Caco-2 (cell line): ENCODE measurements at regions of chr1 and their contacts with region 1.

Region 1: DNA sequence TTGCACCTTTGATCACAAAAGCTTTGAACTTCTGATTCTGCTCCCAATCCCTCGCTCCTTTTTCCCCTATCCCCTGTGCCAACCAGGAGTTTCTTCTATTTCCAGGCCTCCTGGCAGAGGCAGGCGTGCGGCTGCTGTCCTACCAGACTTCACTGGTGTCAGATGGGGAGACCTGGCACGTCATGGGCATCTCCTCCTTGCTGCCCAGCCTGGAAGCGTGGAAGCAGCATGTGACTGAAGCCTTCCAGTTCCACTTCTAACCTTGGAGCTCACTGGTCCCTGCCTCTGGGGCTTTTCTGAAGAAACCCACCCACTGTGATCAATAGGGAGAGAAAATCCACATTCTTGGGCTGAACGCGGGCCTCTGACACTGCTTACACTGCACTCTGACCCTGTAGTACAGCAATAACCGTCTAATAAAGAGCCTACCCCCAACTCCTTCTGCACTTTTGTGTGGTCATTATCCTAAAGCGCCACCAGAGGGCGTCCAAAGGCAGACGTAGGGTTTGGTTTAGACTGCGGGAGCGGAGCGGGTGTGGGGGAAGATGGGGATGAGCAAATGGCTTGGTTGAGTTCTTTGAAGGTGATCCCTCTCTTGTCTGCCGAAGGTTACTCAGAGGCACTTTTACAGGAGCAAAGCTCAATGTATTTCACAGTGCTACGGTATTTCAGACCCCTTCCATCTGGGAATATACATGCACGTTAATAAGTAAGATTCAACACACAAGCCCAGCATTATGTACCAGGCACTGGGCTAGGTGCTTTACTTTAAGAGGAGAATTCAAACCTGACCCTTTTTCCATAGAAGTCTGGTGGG is 24.7 kb downstream of the HMGCS2 start:
- DNase-seq: peak; percentile 69 to 73
- H3K4me3 ChIP-seq: no peak overlapping the region
- H3K4me3 Mint-ChIP-seq: peak overlapping the region; percentile 12
- H3K27ac Mint-ChIP-seq: peak overlapping the region; percentile 30
- H3K4me1 ChIP-seq: peaks cover 8% of the 10 kb centered on the region; the same call in 1 of the 2 replicates
- H3K4me1 Mint-ChIP-seq: peaks cover 13% of the 10 kb centered on the region
- H3K27me3 ChIP-seq: no peaks in the 10 kb centered on the region
- H3K27me3 Mint-ChIP-seq: no peaks in the 10 kb centered on the region
- CTCF ChIP-seq: peak; percentile 79 to 80

Region 2: DNA sequence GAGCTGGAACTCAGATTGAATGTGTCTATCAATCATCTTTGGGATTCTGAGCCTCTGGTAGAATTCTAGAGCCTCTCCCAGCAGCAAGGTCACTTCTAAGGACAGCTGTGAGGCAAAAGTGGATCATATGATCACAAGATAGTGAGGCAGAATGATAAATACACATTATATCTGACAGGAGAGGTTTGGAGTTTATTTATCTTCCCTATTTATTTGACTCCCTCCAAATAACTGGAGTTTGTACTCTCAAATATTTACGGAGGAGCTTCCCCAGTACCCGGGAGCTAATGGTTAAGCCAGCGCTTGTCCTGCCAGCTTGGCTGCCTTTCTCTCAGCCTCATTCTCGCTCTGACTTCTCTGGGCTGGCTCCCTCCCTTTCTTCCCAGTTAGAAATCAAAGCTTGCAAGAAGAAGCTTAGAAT is 22.4 kb after region 1 on chr1:
- CTCF ChIA-PET with region 1: interaction called, 3 read pairs
- POLR2A ChIA-PET with region 1: no interaction called
- intact Hi-C with region 1: loop called (anchors 1 kb)
- DNase-seq: peak; percentile 65 to 71
- H3K4me3 ChIP-seq: peak overlapping the region; percentile 37
- H3K4me3 Mint-ChIP-seq: peak overlapping the region; percentile 63
- H3K27ac Mint-ChIP-seq: peak overlapping the region; percentile 45
- H3K4me1 ChIP-seq: peaks cover 60% of the 10 kb centered on the region
- H3K4me1 Mint-ChIP-seq: peaks cover 24% of the 10 kb centered on the region
- H3K27me3 ChIP-seq: no peaks in the 10 kb centered on the region
- H3K27me3 Mint-ChIP-seq: no peaks in the 10 kb centered on the region
- CTCF ChIP-seq: no peak

Region 3: DNA sequence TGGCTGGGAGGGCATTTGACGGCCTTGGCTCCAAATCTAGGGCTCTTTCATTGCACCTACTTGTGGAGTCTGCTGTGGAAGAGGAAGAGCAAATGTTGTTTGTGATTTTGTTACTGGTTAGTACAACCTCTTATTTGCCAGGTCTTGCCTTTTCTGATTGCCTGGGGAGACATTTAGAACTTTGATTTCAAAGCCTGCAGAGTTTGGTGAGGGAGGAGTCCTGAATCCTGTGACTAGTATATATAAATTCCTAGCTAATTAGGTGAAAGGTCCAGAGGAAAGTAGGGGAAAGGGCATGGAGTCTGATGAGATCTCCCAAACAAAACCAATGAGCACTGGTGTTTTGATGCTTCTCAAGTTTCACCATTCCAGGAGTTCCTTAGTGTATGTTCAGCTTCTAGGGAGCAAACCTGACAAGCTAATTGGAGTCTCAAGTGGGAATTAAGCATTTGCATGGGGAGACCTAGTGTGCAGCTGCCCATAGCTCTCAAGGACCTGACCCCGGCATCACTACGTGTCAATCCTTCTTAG is 29.8 kb after region 1 on chr1:
- CTCF ChIA-PET with region 1: interaction called, 3 read pairs
- POLR2A ChIA-PET with region 1: no interaction called
- intact Hi-C with region 1: loop called (anchors 1 kb)
- DNase-seq: no peak
- H3K4me3 ChIP-seq: no peak overlapping the region
- H3K4me3 Mint-ChIP-seq: no peak overlapping the region
- H3K27ac Mint-ChIP-seq: no peak overlapping the region
- H3K4me1 ChIP-seq: peaks cover 70% of the 10 kb centered on the region
- H3K4me1 Mint-ChIP-seq: peaks cover 19% of the 10 kb centered on the region
- H3K27me3 ChIP-seq: no peaks in the 10 kb centered on the region
- H3K27me3 Mint-ChIP-seq: no peaks in the 10 kb centered on the region
- CTCF ChIP-seq: no peak

Region 4: DNA sequence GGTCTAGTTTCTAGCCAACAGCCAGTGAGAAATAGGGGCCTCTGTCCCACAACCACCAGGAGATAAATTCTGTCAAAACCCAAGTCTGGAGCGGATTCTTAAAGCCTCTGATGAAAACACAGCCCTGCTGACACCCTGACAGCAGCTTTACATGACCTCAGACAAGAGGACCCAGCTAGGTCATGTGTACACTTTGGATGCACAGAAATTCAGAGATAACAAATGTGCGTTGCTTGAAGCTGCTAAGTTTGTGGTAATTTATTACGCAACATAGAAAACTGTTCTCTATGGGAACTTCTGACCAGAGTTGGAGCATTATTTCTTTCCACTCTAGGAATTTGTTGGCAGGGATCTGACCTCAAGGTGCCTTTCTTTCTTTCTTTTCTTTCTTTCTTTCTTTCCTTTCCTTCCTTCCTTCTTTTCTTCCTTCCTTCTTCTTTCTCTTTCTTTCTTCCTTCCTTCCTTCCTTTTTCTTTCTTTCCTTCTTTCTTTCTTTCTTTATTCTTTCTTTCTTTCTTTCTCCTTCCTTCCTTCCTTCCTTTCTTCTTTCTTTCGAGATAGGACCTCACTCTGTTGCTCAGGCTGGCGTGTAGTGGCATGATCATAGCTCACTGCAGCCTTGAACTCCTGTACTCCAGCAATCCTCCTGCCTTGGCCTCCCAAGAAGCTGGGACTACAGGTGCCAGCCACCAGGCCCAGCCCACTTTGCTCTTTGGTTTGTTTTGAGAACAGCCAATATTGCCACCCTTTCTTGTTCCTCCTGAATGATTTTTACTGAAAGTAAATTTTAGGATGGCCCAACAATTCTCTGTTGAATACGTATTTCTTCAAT is 39.6 kb after region 1 on chr1:
- CTCF ChIA-PET with region 1: no interaction called
- POLR2A ChIA-PET with region 1: no interaction called
- intact Hi-C with region 1: loop called (anchors 1 kb)
- DNase-seq: no peak
- H3K4me3 ChIP-seq: no peak overlapping the region
- H3K4me3 Mint-ChIP-seq: no peak overlapping the region
- H3K27ac Mint-ChIP-seq: peak overlapping the region; percentile 17
- H3K4me1 ChIP-seq: peaks cover 47% of the 10 kb centered on the region
- H3K4me1 Mint-ChIP-seq: peaks cover 43% of the 10 kb centered on the region
- H3K27me3 ChIP-seq: no peaks in the 10 kb centered on the region
- H3K27me3 Mint-ChIP-seq: no peaks in the 10 kb centered on the region
- CTCF ChIP-seq: no peak

Region 5: DNA sequence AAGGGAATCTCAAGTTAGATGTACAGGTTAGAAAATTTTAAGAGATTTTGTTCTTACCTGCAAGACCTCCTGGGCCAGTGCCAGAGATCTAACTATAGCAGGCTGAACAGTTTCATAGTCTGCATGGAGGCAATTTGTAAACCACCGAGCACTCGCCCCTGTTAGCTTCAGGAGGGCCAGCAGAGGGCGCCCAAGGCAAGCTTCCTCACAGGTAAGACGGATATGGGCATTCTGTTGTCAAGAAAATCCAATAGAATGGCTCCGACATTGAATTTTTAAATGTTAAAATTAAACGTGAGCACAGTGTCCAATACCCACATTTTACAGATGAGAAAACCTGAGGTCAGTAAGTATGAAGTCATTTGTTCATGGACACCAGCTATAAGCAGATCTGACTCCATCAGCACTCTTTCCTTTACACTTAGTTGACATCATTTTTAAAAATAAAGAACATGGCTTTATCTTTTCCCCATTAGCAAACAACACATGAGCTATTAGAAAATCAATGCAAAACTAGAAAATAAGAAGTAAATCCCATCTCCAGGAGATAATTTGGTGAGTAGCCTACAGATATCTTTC is 65.1 kb after region 1 on chr1:
- CTCF ChIA-PET with region 1: no interaction called
- POLR2A ChIA-PET with region 1: no interaction called
- intact Hi-C with region 1: loop called (anchors 1 kb)
- DNase-seq: peak; percentile 66 to 70
- H3K4me3 ChIP-seq: no peak overlapping the region
- H3K4me3 Mint-ChIP-seq: peak overlapping the region; percentile 44
- H3K27ac Mint-ChIP-seq: no peak overlapping the region
- H3K4me1 ChIP-seq: no peaks in the 10 kb centered on the region
- H3K4me1 Mint-ChIP-seq: peaks cover 8% of the 10 kb centered on the region
- H3K27me3 ChIP-seq: no peaks in the 10 kb centered on the region
- H3K27me3 Mint-ChIP-seq: no peaks in the 10 kb centered on the region
- CTCF ChIP-seq: peak; percentile 82 to 89

Region 6: GRCh38 chr1:119870917-119871596 is 127.1 kb after region 1 on chr1:
- CTCF ChIA-PET with region 1: no interaction called
- POLR2A ChIA-PET with region 1: no interaction called
- intact Hi-C with region 1: loop called (anchors 1 kb)
- DNase-seq: peak; percentile 76 to 87
- H3K4me3 ChIP-seq: no peak overlapping the region
- H3K4me3 Mint-ChIP-seq: no peak overlapping the region
- H3K27ac Mint-ChIP-seq: peak overlapping the region; percentile 17
- H3K4me1 ChIP-seq: no peaks in the 10 kb centered on the region
- H3K4me1 Mint-ChIP-seq: no peaks in the 10 kb centered on the region
- H3K27me3 ChIP-seq: no peaks in the 10 kb centered on the region
- H3K27me3 Mint-ChIP-seq: no peaks in the 10 kb centered on the region
- CTCF ChIP-seq: peak; percentile 82 to 87

Region 7: DNA sequence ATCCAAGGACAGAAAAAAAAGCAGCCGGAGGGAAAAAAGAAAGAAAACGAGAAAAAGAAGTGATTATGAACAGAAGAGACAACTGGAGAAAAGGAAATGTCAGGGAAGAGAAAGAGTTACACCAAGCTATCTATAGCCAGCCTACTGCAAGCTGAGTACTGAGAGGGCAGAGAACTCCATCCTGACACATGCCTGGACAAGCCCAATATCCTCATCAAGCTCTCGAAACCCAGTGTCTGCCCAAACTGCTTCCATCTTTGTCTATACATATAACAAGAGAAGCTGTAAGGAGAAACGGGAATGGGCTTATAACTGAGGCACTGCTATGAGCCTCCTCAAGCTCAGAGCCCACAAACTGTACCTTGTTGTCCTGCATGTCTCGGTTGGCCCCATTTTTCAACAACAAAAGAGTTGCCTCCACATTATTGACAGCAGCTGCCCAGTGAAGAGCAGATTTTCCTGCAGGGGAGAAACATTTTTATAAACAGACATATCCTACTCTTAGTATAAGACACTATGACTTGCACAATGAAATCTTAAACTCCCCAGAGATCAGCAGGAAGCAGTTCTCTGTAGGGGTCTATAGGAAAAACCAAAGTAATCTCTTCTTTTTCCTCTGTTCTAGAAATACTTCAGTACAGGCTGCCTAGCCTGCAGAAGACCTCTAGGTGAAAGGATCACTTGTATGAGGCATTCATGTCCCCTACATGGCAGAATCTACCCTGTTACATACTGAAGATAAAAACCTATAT is 173.5 kb after region 1 on chr1:
- CTCF ChIA-PET with region 1: no interaction called
- POLR2A ChIA-PET with region 1: no interaction called
- intact Hi-C with region 1: no loop called
- DNase-seq: no peak
- H3K4me3 ChIP-seq: no peak overlapping the region
- H3K4me3 Mint-ChIP-seq: no peak overlapping the region
- H3K27ac Mint-ChIP-seq: no peak overlapping the region
- H3K4me1 ChIP-seq: no peaks in the 10 kb centered on the region
- H3K4me1 Mint-ChIP-seq: no peaks in the 10 kb centered on the region
- H3K27me3 ChIP-seq: no peaks in the 10 kb centered on the region
- H3K27me3 Mint-ChIP-seq: no peaks in the 10 kb centered on the region
- CTCF ChIP-seq: no peak